ENCODE measurements at regions of chr3 and their contacts with region 1.

Region 1: GRCh38 chr3:146308682-146309081 is 57.8 kb upstream of the PLSCR4 start:
- DNase-seq: peak; percentile 67
- H3K4me3 ChIP-seq: no peak overlapping the region
- H3K27ac ChIP-seq: peak overlapping the region; percentile 48
- H3K4me1 ChIP-seq: peaks cover 10% of the 10 kb centered on the region
- H3K27me3 ChIP-seq: no peaks in the 10 kb centered on the region
- CTCF ChIP-seq: no peak

Region 2: DNA sequence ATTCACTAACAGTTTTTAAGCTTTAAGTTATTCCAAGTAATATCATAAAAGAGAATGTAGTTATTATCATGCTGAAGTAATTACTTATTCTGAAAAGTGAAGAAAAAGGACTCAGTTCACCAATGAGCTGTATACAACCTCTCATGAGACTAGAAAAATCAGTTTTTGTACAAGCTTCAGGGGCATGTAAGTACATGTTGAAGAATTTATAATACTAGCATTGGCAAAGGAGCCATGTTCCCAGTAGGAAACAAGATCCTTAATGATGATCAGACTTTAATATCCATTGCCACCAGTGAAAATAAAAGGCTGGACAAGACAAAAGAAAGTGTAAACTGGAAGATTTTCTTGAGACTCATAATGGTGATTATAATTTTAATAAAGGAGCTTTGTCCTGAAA is 680.5 kb before region 1 on chr3:
- CTCF ChIA-PET with region 1: no interaction called
- POLR2A ChIA-PET with region 1: no interaction called
- intact Hi-C with region 1: no loop called
- DNase-seq: no peak
- H3K4me3 ChIP-seq: no peak overlapping the region
- H3K27ac ChIP-seq: no peak overlapping the region
- H3K4me1 ChIP-seq: no peaks in the 10 kb centered on the region
- H3K27me3 ChIP-seq: no peaks in the 10 kb centered on the region
- CTCF ChIP-seq: no peak

Region 3: DNA sequence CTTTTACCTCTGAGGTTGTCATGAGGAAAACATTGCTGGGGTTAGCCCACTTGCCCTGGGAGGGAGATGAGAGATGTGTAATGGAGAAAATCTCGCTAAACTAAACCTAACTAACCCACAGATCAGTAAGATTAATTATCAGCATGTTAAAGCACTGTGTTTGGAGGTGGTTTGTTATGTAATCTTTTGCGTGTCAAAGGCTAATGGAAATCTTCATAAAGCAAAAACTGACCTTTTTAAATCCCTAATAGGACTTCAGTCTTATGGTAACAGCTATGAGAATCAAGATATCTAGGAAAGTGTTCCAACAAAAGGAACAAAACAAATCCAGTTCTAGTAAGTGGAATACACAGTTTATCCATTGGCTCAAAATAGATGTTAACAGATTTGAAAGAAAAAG is 250.4 kb before region 1 on chr3:
- CTCF ChIA-PET with region 1: no interaction called
- POLR2A ChIA-PET with region 1: no interaction called
- intact Hi-C with region 1: no loop called
- DNase-seq: no peak
- H3K4me3 ChIP-seq: no peak overlapping the region
- H3K27ac ChIP-seq: no peak overlapping the region
- H3K4me1 ChIP-seq: no peaks in the 10 kb centered on the region
- H3K27me3 ChIP-seq: no peaks in the 10 kb centered on the region
- CTCF ChIP-seq: no peak

Region 4: DNA sequence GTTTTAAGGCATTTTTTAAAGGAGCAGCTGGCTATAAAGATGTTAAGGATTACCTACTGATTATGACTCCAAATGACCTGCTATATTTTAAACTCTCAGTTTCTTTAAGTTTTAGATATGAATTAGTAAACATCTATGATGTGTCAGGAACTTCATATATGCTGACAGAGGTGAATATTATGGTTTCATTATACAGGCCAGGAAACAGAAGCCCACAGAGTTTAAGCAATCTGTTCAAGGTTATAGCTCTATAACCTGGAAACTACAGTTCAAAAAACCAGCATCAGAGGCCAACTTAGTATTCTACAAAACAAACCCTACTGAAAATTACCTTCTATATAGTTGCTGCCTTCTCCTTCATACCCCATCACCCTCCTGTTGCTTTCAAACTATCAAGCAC is 75.2 kb before region 1 on chr3:
- CTCF ChIA-PET with region 1: no interaction called
- POLR2A ChIA-PET with region 1: no interaction called
- intact Hi-C with region 1: loop called (anchors 2 kb)
- DNase-seq: no peak
- H3K4me3 ChIP-seq: no peak overlapping the region
- H3K27ac ChIP-seq: no peak overlapping the region
- H3K4me1 ChIP-seq: no peaks in the 10 kb centered on the region
- H3K27me3 ChIP-seq: no peaks in the 10 kb centered on the region
- CTCF ChIP-seq: no peak

Measured in A673 (cell line).